Activated CD4-positive, alpha-beta memory T cell treated with anti-CD3 and anti-CD28 coated beads, Interleukin-2, amount 10 ng/mL, durations not matched to agents 7 days and 5 days (primary cell): ENCODE measurements at regions of chr9 and their contacts with region 1.

Region 1: DNA sequence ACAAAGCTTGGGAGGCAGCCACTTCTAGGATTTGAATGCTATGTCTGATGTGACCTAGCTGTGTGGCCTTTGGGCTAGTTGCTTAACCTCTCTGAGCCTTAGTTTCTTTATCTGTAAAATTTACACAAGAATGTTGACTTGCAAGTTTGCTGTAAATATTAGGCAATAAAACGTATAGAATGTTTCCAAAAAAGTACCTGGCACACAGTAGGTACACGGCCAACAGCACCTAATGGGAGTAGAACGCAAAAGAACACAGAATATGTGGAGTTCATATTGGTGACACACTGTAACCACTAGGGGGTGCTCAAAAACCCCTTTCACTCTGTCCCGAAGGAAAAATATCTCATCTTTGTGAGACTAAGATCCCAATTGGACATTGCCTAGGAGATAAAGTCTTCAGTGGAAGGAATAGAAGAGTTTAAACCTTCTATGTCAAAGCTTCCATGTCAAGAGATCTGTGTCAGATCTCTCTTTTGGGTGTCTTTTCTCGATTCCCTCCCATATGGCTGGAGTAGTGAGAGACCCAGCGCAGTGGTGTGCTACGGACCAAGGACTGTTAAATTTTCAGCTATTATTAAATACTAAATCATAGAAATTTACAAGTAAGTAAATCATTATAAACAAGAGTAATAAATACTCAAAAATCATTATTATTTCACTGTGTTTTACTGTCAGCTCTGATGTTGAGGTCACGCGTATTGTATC is 145.4 kb upstream of the RAD23B start:
- DNase-seq: no peak
- H3K4me3 Mint-ChIP-seq: no peak overlapping the region
- H3K27ac Mint-ChIP-seq: no peak overlapping the region
- H3K4me1 Mint-ChIP-seq: no peaks in the 10 kb centered on the region
- H3K27me3 Mint-ChIP-seq: peaks cover 10% of the 10 kb centered on the region

Region 2: GRCh38 chr9:107102677-107103076 is 35.0 kb before region 1 on chr9:
- CTCF ChIA-PET with region 1: no interaction called
- POLR2A ChIA-PET with region 1: no interaction called
- DNase-seq: no peak
- H3K4me3 Mint-ChIP-seq: no peak overlapping the region
- H3K27ac Mint-ChIP-seq: no peak overlapping the region
- H3K4me1 Mint-ChIP-seq: no peaks in the 10 kb centered on the region
- H3K27me3 Mint-ChIP-seq: no peaks in the 10 kb centered on the region

Region 3: GRCh38 chr9:107172160-107172978 is 34.7 kb after region 1 on chr9:
- CTCF ChIA-PET with region 1: interaction called, 12 read pairs
- POLR2A ChIA-PET with region 1: no interaction called
- DNase-seq: peak; percentile 68
- H3K4me3 Mint-ChIP-seq: no peak overlapping the region
- H3K27ac Mint-ChIP-seq: peak overlapping the region; percentile 36
- H3K4me1 Mint-ChIP-seq: peaks cover 37% of the 10 kb centered on the region
- H3K27me3 Mint-ChIP-seq: no peaks in the 10 kb centered on the region

Region 4: GRCh38 chr9:107389617-107390071 is 252.0 kb after region 1 on chr9:
- CTCF ChIA-PET with region 1: no interaction called
- POLR2A ChIA-PET with region 1: no interaction called
- DNase-seq: no peak
- H3K4me3 Mint-ChIP-seq: no peak overlapping the region
- H3K27ac Mint-ChIP-seq: no peak overlapping the region
- H3K4me1 Mint-ChIP-seq: no peaks in the 10 kb centered on the region
- H3K27me3 Mint-ChIP-seq: no peaks in the 10 kb centered on the region